Right ventricle myocardium inferior (tissue), 1 donor: ENCODE measurements at regions of chr1 and their contacts with region 1.

Region 1: GRCh38 chr1:36420836-36421664 is 23.3 kb upstream of the LSM10 start:
- DNase-seq: peak; percentile 92
- ATAC-seq: peak; percentile 93

Region 2: DNA sequence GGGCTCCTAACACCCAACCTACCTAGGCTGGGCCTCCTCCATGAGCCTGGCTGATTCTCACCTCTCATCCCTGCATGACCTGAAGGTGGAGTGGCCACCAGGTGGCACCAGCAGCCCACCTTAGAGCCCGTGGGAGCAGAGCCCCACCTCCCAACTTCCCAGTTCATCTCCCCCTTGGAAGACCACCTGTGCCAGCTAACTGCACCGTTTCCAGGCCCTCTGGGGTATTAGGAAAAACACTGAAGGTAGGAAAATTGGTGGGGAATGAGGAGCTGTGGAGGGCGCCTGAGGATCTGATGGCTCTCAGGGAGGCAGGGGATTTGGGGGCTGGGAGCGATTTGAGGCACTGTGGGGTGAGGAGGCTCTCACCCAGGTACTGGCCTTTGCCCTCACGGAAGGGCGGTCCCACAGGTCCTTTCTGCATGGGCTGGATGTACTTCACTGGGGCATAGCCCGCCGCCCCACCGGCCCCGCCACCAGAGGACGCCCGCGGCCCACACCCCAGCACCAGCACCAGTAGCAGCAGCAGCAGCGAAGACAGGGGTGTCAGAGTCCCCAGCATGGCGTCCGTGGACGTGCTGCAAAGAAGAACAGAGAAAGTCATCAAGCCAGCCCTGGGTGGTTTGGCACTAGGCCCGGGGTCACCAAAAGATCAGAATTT is 321.2 kb before region 1 on chr1:
- intact Hi-C with region 1: loop called (anchors 2 kb)
- DNase-seq: peak; percentile 88
- ATAC-seq: peak; percentile 79

Region 3: DNA sequence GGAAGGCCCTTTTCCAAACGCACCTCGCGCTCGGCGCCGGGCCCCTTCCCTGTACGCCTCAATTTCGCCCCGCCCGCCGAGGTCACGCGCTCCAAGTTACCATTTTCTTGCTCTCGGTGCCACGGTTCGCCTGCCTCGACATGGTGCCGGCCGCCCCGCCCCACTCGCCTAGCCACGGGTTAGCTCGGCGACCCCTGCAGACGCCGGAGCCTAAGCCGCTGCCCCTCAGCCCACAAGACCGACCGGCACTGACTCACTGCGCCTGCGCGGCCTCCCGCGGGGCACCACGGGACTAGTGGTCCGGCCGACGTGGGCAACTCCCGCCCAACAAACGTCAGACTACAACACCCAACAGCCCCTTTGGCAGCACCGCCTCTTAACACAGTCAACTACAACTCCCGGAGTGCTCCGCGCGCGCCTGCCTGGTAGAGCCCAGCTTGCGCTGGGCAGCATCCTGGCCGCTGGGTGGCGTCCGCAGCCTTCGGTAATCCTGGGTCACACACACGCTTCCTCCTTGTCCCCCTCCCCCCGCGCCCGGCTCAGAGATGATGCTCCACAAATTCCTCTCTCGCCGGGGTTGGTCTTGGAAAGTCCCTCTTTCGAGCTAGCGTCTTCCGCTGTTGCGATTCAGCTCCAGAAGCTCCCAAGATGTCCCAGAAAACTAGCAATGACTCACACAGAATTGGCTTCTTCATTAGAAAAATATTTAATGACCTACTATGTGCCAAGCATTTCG is 271.6 kb before region 1 on chr1 and contains the start of gene TRAPPC3:
- intact Hi-C with region 1: loop called (anchors 2 kb)
- DNase-seq: peak; percentile 100
- ATAC-seq: peak; percentile 94
- total RNA-seq, gene TRAPPC3: 53.9 TPM

Region 4: GRCh38 chr1:36306902-36307456 is 114.1 kb before region 1 on chr1:
- intact Hi-C with region 1: loop called (anchors 10 kb)
- DNase-seq: peak; percentile 94
- ATAC-seq: peak; percentile 98

Region 5: GRCh38 chr1:36342481-36343478 is 78.3 kb before region 1 on chr1:
- intact Hi-C with region 1: loop called (anchors 1 kb)
- DNase-seq: no peak
- ATAC-seq: peak; percentile 63

Region 6: GRCh38 chr1:36369061-36369861 is 51.8 kb before region 1 on chr1:
- intact Hi-C with region 1: loop called (anchors 2 kb)
- DNase-seq: peak; percentile 89
- ATAC-seq: no peak

Region 7: GRCh38 chr1:36463803-36464604 is 43.0 kb after region 1 on chr1 and contains the start of gene MRPS15:
- intact Hi-C with region 1: loop called (anchors 2 kb)
- DNase-seq: peak; percentile 98
- ATAC-seq: peak; percentile 95
- total RNA-seq, gene MRPS15: 114 TPM